Activated naive CD4-positive, alpha-beta T cell treated with anti-CD3 and anti-CD28 coated beads for 36 hours (primary cell): ENCODE measurements at regions of chr6 and their contacts with region 1.

Region 1: GRCh38 chr6:107982486-107982885 is 24.5 kb upstream of the SEC63 start:
- DNase-seq: no peak
- H3K4me3 Mint-ChIP-seq: no peak overlapping the region
- H3K27ac Mint-ChIP-seq: no peak overlapping the region
- H3K4me1 Mint-ChIP-seq: no peaks in the 10 kb centered on the region
- H3K27me3 Mint-ChIP-seq: no peaks in the 10 kb centered on the region

Region 2: DNA sequence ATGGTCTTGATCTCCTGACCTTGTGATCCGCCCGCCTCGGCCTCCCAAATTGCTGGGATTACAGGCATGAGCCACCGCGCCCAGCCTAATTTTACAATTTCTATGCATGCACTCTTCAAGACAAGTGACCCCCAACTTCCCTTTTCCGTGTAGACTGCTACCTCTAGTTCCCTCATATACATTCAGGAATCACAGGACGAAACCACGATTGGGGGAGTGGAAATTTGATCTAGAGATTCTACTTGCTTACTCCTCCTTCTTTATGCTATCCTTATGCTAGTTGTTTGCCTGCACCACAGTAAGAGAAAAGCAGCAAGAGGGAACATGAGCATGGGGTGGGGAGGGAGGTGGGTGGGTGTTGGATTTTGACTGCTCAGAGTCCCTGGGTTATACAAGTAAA is 57.2 kb after region 1 on chr6:
- CTCF ChIA-PET with region 1: interaction called, 57 read pairs
- intact Hi-C with region 1: no loop called
- DNase-seq: no peak
- H3K4me3 Mint-ChIP-seq: no peak overlapping the region
- H3K27ac Mint-ChIP-seq: no peak overlapping the region
- H3K4me1 Mint-ChIP-seq: no peaks in the 10 kb centered on the region
- H3K27me3 Mint-ChIP-seq: no peaks in the 10 kb centered on the region